A673 (cell line): ENCODE measurements at regions of chr18 and their contacts with region 1.

Region 1: GRCh38 chr18:29309366-29309765 is 1132.4 kb upstream of the CDH2 start:
- DNase-seq: peak; percentile 24
- H3K4me3 ChIP-seq: no peak overlapping the region
- H3K27ac ChIP-seq: no peak overlapping the region
- H3K4me1 ChIP-seq: no peaks in the 10 kb centered on the region
- H3K27me3 ChIP-seq: no peaks in the 10 kb centered on the region
- CTCF ChIP-seq: no peak

Region 2: GRCh38 chr18:29259838-29260237 is 49.5 kb before region 1 on chr18:
- CTCF ChIA-PET with region 1: no interaction called
- POLR2A ChIA-PET with region 1: no interaction called
- intact Hi-C with region 1: loop called (anchors 5 kb)
- DNase-seq: no peak
- H3K4me3 ChIP-seq: no peak overlapping the region
- H3K27ac ChIP-seq: no peak overlapping the region
- H3K4me1 ChIP-seq: no peaks in the 10 kb centered on the region
- H3K27me3 ChIP-seq: peaks cover 7% of the 10 kb centered on the region
- CTCF ChIP-seq: no peak